Stomach (tissue), 19 donors: ENCODE measurements at regions of chr11 and their contacts with region 1.

Region 1: DNA sequence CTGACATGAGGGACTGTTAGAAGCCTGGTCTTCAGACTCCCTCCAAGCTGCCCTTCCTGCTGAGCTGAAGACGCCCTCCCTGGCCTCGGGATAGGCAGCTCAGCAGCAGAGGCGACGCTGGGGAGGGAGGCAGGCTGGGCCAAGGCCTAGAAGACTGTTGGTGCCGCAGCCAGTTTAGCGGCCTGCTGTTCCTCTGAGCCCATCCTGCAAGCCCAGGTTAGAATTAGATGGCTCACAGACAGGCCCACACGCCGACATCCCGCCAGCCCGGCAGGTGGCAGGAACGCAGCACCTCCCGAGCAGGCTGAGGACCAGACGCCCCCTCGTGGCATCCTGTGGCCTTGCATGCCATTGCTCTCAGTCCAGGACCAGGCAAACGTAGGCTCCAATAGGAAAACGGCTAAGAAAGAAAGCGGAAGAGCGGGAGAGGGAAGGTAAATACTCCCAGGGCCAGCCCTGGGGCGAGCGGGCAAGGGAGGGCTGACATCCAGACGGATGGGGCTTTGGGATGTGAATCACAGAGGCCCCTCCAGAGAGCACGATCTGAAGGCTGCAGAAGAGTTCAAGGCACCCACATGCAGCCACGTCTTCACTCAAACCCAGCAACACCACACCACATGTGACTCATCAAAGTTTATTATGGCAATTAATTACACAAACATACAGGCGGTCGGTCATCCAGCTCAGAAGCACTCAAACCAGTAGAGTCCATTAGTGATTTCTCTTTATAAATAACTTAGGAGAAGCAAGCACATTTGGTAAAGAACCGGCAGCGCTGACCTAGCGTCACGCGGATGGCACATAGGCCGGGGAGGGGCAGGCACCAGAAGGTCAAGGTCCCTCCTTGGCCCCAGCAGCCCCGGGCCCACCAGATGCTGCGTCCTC is 27.6 kb downstream of the CD5 start:
- DNase-seq: peak; percentile 94 to 97
- H3K4me3 ChIP-seq: peak overlapping the region in 3 of 4 donors; percentile 16 to 30 (median 23)
- H3K27ac ChIP-seq: peak overlapping the region; percentile 60 to 81 (median 68)
- H3K4me1 ChIP-seq: peaks cover 13 to 32% (median 23%) of the 10 kb centered on the region in 4 donors
- H3K27me3 ChIP-seq: no peaks in the 10 kb centered on the region
- CTCF ChIP-seq: peak; percentile 90 to 100 (median 99)
- EP300 ChIP-seq: no peak
- POLR2A ChIP-seq: no peak

Region 2: DNA sequence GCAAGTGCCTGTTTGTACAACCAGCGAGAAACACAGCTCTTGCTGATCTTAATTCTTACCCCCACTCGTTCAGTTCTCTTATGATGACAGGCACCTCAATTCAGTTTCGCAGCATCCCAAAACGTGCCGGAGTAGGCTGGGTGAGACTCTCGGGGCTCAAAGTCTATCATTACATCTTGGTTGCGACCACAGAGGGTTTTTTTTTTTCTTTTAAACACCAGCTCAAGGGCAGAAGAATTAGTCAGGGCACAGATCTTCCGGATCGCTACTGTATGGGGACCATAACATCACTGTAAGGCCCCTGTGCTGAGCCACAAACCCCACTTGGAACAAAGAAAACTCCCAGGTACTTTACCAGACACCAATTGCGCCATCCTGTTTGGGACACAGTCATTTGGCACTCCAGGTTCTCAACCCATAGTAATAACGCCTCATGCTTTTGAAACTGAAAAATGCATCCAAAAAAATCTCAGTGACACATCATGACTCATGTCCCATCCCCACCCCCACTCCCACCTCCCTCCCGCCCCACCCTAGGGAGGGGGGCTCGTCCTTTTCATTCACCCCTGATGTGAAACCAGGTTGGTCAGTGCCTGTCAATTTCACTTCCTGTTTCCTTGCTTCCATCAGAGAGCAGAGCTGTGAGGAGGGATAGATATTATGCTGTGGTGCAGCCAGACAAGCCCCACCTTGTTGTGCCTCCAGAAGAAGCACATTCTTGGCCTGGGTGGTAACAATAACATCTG is 68.6 kb before region 1 on chr11:
- intact Hi-C with region 1: no loop called
- DNase-seq: peak in 1 of 2 donors; percentile 56
- H3K4me3 ChIP-seq: no peak overlapping the region
- H3K27ac ChIP-seq: peak overlapping the region in 1 of 5 donors; percentile 20
- H3K4me1 ChIP-seq: peaks cover 0 to 10% (median 0%) of the 10 kb centered on the region in 4 donors
- H3K27me3 ChIP-seq: no peaks in the 10 kb centered on the region
- CTCF ChIP-seq: no peak
- EP300 ChIP-seq: no peak
- POLR2A ChIP-seq: no peak

Region 3: DNA sequence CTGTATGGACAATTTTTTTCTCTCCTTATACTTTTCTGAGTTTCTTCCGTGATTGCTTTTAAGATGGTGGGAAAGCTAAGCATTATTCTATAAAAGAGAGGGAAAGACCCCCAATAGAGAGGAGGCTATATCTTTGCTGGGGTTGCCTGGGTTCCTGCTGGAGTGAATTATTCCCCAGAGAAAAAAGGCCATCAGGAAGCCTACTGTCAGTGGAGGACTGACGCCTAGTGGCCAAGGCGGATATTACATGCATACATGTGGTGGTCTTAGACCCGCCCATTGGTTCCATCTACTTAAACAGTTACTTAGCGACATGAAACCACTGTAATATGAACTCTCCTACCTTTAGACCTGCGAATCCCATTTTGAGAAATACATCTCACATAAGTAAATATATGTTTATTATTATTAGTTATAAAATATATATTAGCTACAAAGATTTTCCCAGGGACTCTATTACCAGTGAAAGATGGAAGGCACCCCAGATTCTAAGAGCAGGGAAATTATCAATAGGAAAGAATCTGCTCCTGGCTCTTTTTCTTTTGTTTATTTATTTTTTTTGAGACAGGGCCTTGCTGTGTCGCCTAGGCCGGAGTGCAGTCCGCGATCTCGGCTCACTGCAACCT is 57.7 kb after region 1 on chr11:
- intact Hi-C with region 1: loop called (anchors 2 kb)
- DNase-seq: peak; percentile 86 to 93
- H3K4me3 ChIP-seq: no peak overlapping the region
- H3K27ac ChIP-seq: no peak overlapping the region
- H3K4me1 ChIP-seq: peaks cover 0 to 5% (median 2%) of the 10 kb centered on the region in 4 donors
- H3K27me3 ChIP-seq: peaks cover 0 to 9% (median 0%) of the 10 kb centered on the region in 3 donors
- CTCF ChIP-seq: peak in 5 of 7 experiments; percentile 84 to 97 (median 92)
- EP300 ChIP-seq: no peak
- POLR2A ChIP-seq: no peak